ENCODE measurements at regions of chr6 and their contacts with region 1.

Region 1: DNA sequence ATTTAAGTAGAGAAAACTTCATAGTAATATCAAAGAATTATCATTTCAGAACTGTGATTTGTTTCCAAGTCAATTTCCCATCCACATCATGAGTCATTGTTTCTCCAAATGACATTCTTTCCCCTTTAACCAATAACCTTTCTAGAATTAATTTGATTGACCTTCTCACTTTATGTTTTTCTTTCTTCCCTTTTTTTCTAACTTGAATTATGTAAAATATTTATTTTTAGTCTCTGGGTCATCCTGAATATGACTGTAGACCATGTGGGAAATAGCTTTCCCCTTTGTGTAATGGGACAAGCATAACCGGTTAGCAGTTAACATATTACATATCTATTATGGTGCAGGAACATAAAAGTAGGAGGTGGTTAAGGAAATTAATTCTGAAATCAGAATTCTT is 291.1 kb downstream of the GJA1 start:
- DNase-seq: no peak
- ATAC-seq: peak in 1 of 4 donors; percentile 61
- H3K4me3 ChIP-seq: no peak overlapping the region
- H3K27ac ChIP-seq: no peak overlapping the region
- H3K4me1 ChIP-seq: peaks cover 0 to 15% (median 1%) of the 10 kb centered on the region in 12 donors
- H3K27me3 ChIP-seq: no peaks in the 10 kb centered on the region
- CTCF ChIP-seq: no peak
- POLR2A ChIP-seq: no peak

Region 2: DNA sequence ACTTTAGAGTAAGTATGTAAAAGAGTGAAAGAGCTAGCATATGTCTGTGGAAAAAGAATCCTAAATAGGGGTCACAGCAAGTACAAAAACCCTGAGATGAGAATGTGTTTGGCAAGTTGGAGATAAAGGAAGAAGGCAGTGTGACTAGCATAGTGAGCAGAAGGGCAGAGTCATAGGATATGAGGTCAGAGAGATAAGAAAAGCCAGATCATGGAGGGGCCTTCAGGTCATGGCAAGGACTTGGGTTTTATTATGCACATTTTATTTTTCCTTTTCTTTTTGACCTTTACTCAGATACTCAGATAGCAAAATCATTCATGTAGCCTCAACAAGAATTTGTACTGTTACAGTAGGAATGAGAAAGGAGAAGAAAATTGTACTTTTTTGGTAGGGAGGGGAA is 153.1 kb before region 1 on chr6:
- intact Hi-C with region 1: no loop called
- DNase-seq: no peak
- ATAC-seq: peak in 3 of 4 donors; percentile 74 to 75 (median 75)
- H3K4me3 ChIP-seq: no peak overlapping the region
- H3K27ac ChIP-seq: peak overlapping the region in 7 of 12 donors; percentile 21 to 57 (median 43)
- H3K4me1 ChIP-seq: peaks cover 0 to 16% (median 7%) of the 10 kb centered on the region in 12 donors
- H3K27me3 ChIP-seq: no peaks in the 10 kb centered on the region
- CTCF ChIP-seq: no peak
- POLR2A ChIP-seq: no peak

Region 3: GRCh38 chr6:121652726-121653623 is 73.6 kb before region 1 on chr6:
- intact Hi-C with region 1: loop called in 2 of 10 experiments (anchors 5 kb)
- DNase-seq: no peak
- ATAC-seq: peak; percentile 47 to 83 (median 68)
- H3K4me3 ChIP-seq: peak overlapping the region in 1 of 12 donors; percentile 1
- H3K27ac ChIP-seq: peak overlapping the region in 11 of 12 donors; percentile 23 to 80 (median 62)
- H3K4me1 ChIP-seq: peaks cover 0 to 15% (median 4%) of the 10 kb centered on the region in 12 donors
- H3K27me3 ChIP-seq: no peaks in the 10 kb centered on the region
- CTCF ChIP-seq: no peak
- POLR2A ChIP-seq: no peak